K562 (cell line): ENCODE measurements at regions of chr7 and their contacts with region 1.

Region 1: GRCh38 chr7:151157645-151158329 is 9.7 kb downstream of the GBX1 start:
- DNase-seq: no peak
- ATAC-seq: peak; percentile 50
- H3K4me3 ChIP-seq: no peak overlapping the region
- H3K27ac ChIP-seq: no peak overlapping the region
- H3K4me1 ChIP-seq: no peaks in the 10 kb centered on the region
- H3K27me3 ChIP-seq: peaks cover 42 to 58% of the 10 kb centered on the region in 2 experiments
- CTCF ChIP-seq: no peak
- EP300 ChIP-seq: no peak
- POLR2A ChIP-seq: no peak
- RAD21 ChIP-seq: no peak

Region 2: DNA sequence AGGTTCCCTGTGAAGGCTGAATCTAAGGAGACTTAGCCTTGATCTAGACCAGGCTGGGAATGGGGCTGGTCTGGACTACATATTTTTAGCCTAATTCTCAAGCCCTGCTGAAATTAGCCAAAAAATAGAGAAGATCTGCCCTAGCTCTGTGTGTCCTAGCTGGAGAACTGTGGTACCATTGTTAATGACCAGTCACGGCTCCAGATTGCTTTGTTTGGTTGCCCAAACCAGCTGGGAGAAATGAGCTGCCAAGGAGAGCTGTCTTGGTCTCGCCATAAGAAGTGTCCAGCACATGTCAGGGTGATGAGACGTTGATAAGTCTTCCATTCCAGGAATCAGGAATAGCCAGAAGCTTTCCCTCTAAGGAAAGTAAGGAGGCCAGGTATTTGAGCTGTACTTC is 11.0 kb before region 1 on chr7:
- CTCF ChIA-PET with region 1: no interaction called
- POLR2A ChIA-PET with region 1: interaction called, 20 read pairs
- in situ Hi-C with region 1: no loop called
- intact Hi-C with region 1: no loop called
- DNase-seq: no peak
- ATAC-seq: peak; percentile 11
- H3K4me3 ChIP-seq: no peak overlapping the region
- H3K27ac ChIP-seq: no peak overlapping the region
- H3K4me1 ChIP-seq: peaks cover 0 to 21% of the 10 kb centered on the region in 2 experiments; a peak in 2 of 5 replicates
- H3K27me3 ChIP-seq: peaks cover 30% of the 10 kb centered on the region in 2 experiments; a peak in 4 of 5 replicates
- CTCF ChIP-seq: no peak
- EP300 ChIP-seq: no peak
- POLR2A ChIP-seq: 0 out of 2 replicates have a peak, but pooled peaks have one; percentile 5
- RAD21 ChIP-seq: no peak